Endothelial cell of umbilical vein (primary cell): ENCODE measurements at regions of chr1 and their contacts with region 1.

Region 1: DNA sequence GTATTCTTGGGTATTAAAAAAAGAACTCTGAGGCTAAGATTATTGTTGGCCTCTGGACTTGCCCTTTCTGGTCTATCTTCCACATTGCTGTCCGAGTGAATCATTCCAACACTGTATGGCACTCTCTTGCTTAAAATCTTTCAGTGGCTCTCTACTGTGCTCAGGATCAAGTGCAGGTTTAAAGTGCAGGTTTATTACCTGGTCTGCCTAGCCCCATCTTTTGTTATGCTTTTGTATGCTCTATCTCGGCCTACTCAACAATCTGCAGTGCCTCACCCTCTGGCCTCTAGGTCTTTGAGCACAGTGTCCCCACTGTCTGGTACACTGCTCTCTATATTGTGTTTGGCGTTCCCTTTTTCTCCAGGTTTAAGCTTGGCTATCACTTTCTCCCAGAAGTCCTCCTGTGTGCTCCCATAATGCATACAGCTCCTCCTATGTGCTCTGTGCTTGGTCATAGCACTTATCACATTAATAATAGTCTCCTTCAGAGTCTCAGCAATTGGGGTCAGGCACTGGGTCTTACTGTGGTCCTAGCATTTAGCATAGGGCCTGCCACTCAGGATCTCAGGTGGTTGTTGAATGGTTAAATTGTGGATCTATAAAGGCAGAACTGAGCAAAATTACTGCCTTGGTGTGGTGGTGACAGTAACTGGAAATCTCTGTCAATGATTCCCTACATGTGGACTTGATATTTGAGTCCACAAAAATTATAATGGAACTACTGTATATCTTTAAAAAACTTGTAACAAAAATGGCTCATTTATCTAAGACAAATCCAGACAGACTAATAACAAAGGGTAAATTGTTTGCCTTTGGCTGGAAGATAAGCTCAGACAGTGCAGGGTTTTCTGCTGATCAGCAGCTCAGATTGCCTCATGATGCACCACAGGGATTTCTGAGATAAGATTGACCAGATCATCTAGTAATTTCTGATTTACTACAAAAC is 10.6 kb upstream of the LDLRAD1 start:
- DNase-seq: no peak
- H3K4me3 ChIP-seq: no peak overlapping the region
- H3K27ac ChIP-seq: no peak overlapping the region
- H3K4me1 ChIP-seq: no peaks in the 10 kb centered on the region
- H3K27me3 ChIP-seq: no peaks in the 10 kb centered on the region
- CTCF ChIP-seq: no peak
- POLR2A ChIP-seq: no peak

Region 2: GRCh38 chr1:53705446-53706096 is 323.0 kb before region 1 on chr1:
- CTCF ChIA-PET with region 1: no interaction called
- POLR2A ChIA-PET with region 1: no interaction called
- dilution Hi-C with region 1: no loop called
- intact Hi-C with region 1: no loop called
- DNase-seq: no peak
- H3K4me3 ChIP-seq: no peak overlapping the region
- H3K27ac ChIP-seq: no peak overlapping the region
- H3K4me1 ChIP-seq: no peaks in the 10 kb centered on the region
- H3K27me3 ChIP-seq: peaks cover 12 to 16% of the 10 kb centered on the region in 2 experiments
- CTCF ChIP-seq: no peak
- POLR2A ChIP-seq: no peak

Region 3: GRCh38 chr1:54041806-54042205 is 13.2 kb after region 1 on chr1:
- CTCF ChIA-PET with region 1: interaction called, 11 read pairs
- POLR2A ChIA-PET with region 1: no interaction called
- dilution Hi-C with region 1: no loop called
- intact Hi-C with region 1: no loop called
- DNase-seq: no peak
- H3K4me3 ChIP-seq: no peak overlapping the region
- H3K27ac ChIP-seq: no peak overlapping the region
- H3K4me1 ChIP-seq: peaks cover 5% of the 10 kb centered on the region
- H3K27me3 ChIP-seq: no peaks in the 10 kb centered on the region
- CTCF ChIP-seq: no peak
- POLR2A ChIP-seq: no peak